ENCODE measurements at regions of chr10 and their contacts with region 1.

Region 1: GRCh38 chr10:32139223-32140073 is 83.2 kb upstream of the KIF5B start:
- DNase-seq: peak; percentile 78 to 86
- ATAC-seq: peak; percentile 92 to 96 (median 95)
- H3K4me3 ChIP-seq: no peak overlapping the region
- H3K27ac ChIP-seq: peak overlapping the region in 9 of 10 donors; percentile 47 to 90 (median 73)
- H3K4me1 ChIP-seq: peaks cover 3 to 36% (median 29%) of the 10 kb centered on the region in 9 donors
- H3K27me3 ChIP-seq: no peaks in the 10 kb centered on the region
- CTCF ChIP-seq: peak in 4 of 9 donors; percentile 23 to 43 (median 38)

Region 2: DNA sequence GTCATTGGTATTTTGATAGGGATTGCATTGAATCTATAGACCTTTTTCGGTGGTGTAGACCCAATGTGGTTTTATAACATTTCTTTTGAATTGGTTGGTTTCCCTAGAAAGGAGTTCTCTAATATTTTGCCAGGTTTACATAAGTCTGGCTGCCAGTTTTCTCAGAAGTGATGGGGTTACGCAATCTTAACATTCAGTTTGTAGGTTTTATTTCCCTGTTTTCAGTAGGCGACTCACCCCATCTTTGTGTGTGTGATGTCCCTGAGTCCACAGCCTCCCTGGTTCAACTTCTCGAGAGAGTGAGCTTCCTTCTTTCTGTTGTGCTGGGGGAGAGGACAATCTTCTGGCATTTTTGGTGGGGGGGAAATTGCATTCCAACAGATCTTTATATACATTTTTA is 73.6 kb before region 1 on chr10:
- intact Hi-C with region 1: loop called in 1 of 10 experiments (anchors 5 kb)
- DNase-seq: no peak
- ATAC-seq: no peak
- H3K4me3 ChIP-seq: no peak overlapping the region
- H3K27ac ChIP-seq: no peak overlapping the region
- H3K4me1 ChIP-seq: peaks cover 0 to 9% (median 0%) of the 10 kb centered on the region in 9 donors
- H3K27me3 ChIP-seq: no peaks in the 10 kb centered on the region
- CTCF ChIP-seq: no peak

Measured in heart right ventricle (tissue), 16 donors.